ENCODE measurements at regions of chr1 and their contacts with region 1.

Region 1: DNA sequence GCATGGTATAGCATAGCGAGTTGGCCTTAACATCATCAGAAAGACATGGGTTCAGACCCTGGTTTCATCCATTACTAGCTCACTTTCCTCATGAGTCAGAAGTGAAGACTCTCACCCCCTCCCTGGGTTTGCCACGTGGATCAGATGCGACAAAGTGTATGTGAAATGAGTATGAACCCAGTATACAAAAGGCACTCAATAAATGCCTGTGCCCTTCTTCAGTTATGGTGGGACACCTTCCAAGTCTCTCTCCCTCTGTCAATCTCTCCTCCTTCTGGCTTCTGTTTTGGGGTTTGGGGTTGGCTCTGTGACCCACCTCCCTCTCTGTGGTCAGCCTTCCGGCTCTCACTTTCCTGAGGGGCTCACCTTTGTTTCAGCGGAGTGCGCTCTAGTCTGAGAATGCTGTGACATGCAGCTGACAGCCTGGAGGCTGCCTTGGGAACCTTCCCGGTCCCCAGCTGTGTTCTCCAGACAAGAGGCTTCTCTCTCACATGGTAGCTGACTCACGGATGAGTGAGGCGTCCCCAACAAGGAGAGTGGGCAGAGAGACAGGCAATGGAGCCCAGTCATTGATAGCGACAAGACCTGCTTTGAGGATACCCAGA is 155.0 kb upstream of the EDN2 start:
- DNase-seq: peak; percentile 88
- H3K4me3 Mint-ChIP-seq: peak overlapping the region; percentile 47
- H3K27ac Mint-ChIP-seq: no peak overlapping the region
- H3K4me1 Mint-ChIP-seq: peaks cover 44% of the 10 kb centered on the region
- H3K27me3 Mint-ChIP-seq: no peaks in the 10 kb centered on the region

Region 2: DNA sequence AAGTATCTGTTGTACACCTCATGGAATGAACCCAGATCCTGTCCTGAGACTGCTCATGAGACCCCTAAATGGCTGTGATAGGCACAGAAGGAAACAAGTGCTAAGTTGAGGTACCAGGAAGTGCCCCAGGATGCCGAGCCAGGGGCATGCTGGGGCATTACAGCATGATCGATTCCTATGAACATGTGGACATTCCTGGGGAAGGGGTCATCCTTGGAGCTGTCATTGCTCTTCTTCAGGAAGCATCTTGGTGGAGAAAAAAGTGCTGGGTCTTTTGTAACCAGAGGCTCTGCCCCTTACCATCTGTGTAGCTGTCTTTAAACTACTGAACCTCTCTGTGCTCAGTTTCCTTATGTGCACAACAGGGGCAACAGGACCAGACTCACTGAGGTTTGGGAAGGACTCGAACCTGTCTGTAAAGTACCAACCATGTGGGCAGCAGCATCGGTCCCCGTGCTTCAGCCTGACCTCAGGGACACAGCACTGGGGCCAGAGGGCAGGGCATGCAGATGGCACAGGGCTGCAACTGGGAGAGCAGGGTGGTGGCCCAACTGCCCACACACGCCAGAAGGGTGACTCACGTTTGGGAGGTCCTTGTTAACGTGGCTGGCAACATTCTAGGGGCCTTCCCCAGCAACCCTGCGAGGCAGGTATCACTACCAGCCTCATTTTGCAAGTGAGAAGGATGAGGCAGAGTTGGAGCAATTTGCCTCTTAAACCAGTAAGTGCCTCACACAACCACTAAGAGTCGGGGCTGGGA is 12.6 kb before region 1 on chr1:
- CTCF ChIA-PET with region 1: interaction called, 3 read pairs
- intact Hi-C with region 1: loop called (anchors 1 kb)
- DNase-seq: peak; percentile 83
- H3K4me3 Mint-ChIP-seq: no peak overlapping the region
- H3K27ac Mint-ChIP-seq: peak overlapping the region; percentile 91
- H3K4me1 Mint-ChIP-seq: peaks cover 79% of the 10 kb centered on the region
- H3K27me3 Mint-ChIP-seq: no peaks in the 10 kb centered on the region

Region 3: GRCh38 chr1:41650028-41650880 is 10.8 kb after region 1 on chr1:
- CTCF ChIA-PET with region 1: interaction called, 5 read pairs
- intact Hi-C with region 1: loop called (anchors 1 kb)
- DNase-seq: peak; percentile 79
- H3K4me3 Mint-ChIP-seq: no peak overlapping the region
- H3K27ac Mint-ChIP-seq: peak overlapping the region; percentile 77
- H3K4me1 Mint-ChIP-seq: peaks cover 69% of the 10 kb centered on the region
- H3K27me3 Mint-ChIP-seq: no peaks in the 10 kb centered on the region

Region 4: DNA sequence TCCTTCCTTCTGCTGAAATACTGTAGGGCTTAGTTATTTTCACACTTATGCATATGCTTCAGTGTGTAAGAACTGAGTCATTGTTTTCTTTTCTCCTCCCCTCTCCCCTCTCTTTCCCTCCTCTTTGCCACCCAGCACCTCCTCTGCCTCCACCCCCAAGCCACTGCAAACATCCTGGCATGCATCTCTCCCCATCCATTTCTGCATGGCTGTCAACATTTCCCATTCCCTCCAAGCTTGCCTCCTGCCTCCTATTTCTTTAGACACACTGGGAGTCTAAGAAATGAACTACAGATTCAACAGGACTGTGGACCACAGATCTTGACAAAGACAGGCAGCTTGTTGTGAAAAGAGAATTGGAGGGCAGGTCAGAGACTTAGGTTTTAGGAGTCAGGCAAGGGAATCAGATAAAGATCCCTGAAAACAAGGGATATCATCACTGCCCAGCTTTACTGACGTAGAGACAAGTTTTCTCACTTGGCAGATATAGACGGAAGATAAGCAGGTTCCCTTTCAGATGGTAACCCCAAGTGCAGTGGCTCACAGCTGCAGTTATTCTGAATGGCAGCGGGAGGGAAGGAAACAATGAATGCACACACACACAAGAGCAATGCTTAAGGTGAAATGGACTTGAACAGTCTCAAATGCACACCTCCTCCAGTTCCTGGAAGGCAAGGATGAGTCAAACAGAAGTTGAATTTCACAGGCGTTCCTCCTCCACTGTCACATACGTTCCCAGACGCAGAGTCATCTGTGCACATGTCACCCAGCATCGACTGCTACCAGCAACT is 223.1 kb after region 1 on chr1:
- CTCF ChIA-PET with region 1: no interaction called
- intact Hi-C with region 1: loop called (anchors 5 kb)
- DNase-seq: peak; percentile 85
- H3K4me3 Mint-ChIP-seq: peak overlapping the region; percentile 41
- H3K27ac Mint-ChIP-seq: peak overlapping the region; percentile 88
- H3K4me1 Mint-ChIP-seq: peaks cover 44% of the 10 kb centered on the region
- H3K27me3 Mint-ChIP-seq: no peaks in the 10 kb centered on the region